ENCODE measurements at regions of chr14 and their contacts with region 1.

Region 1: GRCh38 chr14:80987235-80988032 is 32.0 kb downstream of the TSHR start:
- DNase-seq: peak; percentile 38 to 80 (median 63)
- ATAC-seq: peak; percentile 82
- H3K4me3 ChIP-seq: no peak overlapping the region
- H3K4me3 Mint-ChIP-seq: no peak overlapping the region
- H3K27ac ChIP-seq: no peak overlapping the region
- H3K27ac Mint-ChIP-seq: no peak overlapping the region
- H3K4me1 ChIP-seq: no peaks in the 10 kb centered on the region
- H3K4me1 Mint-ChIP-seq: no peaks in the 10 kb centered on the region
- H3K27me3 ChIP-seq: no peaks in the 10 kb centered on the region
- H3K27me3 Mint-ChIP-seq: peaks cover 2% of the 10 kb centered on the region
- CTCF ChIP-seq: peak; percentile 96

Region 2: GRCh38 chr14:80055667-80056496 is 931.6 kb before region 1 on chr14:
- CTCF ChIA-PET with region 1: no interaction called
- POLR2A ChIA-PET with region 1: no interaction called
- intact Hi-C with region 1: loop called in 1 of 2 experiments (anchors 2 kb)
- DNase-seq: peak in 1 of 9 experiments; percentile 1
- ATAC-seq: no peak
- H3K4me3 ChIP-seq: no peak overlapping the region
- H3K4me3 Mint-ChIP-seq: no peak overlapping the region
- H3K27ac ChIP-seq: no peak overlapping the region
- H3K27ac Mint-ChIP-seq: no peak overlapping the region
- H3K4me1 ChIP-seq: no peaks in the 10 kb centered on the region
- H3K4me1 Mint-ChIP-seq: no peaks in the 10 kb centered on the region
- H3K27me3 ChIP-seq: no peaks in the 10 kb centered on the region
- H3K27me3 Mint-ChIP-seq: no peaks in the 10 kb centered on the region
- CTCF ChIP-seq: no peak

Region 3: DNA sequence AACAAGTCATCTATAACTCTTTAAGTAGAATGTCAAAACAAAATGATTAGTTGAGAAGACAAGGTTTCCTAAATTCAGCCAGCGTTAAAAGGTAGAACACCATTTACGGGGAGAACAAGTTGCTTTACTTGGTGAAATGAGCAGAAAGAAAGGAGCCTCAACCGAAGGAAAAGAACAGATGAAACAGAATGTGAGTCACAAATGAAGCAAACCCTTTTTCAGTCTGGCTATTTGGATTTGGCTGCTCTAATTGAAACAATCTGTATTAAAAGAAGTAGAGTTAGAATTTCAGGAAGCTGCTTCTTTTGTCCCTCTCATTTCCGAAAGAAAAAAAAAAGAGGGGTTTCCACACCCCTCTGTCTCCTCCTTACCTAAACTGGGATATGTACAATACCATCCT is 80.5 kb before region 1 on chr14:
- CTCF ChIA-PET with region 1: no interaction called
- POLR2A ChIA-PET with region 1: no interaction called
- intact Hi-C with region 1: no loop called
- DNase-seq: no peak
- ATAC-seq: no peak
- H3K4me3 ChIP-seq: no peak overlapping the region
- H3K4me3 Mint-ChIP-seq: no peak overlapping the region
- H3K27ac ChIP-seq: no peak overlapping the region
- H3K27ac Mint-ChIP-seq: no peak overlapping the region
- H3K4me1 ChIP-seq: no peaks in the 10 kb centered on the region
- H3K4me1 Mint-ChIP-seq: no peaks in the 10 kb centered on the region
- H3K27me3 ChIP-seq: no peaks in the 10 kb centered on the region
- H3K27me3 Mint-ChIP-seq: no peaks in the 10 kb centered on the region
- CTCF ChIP-seq: no peak

Region 4: DNA sequence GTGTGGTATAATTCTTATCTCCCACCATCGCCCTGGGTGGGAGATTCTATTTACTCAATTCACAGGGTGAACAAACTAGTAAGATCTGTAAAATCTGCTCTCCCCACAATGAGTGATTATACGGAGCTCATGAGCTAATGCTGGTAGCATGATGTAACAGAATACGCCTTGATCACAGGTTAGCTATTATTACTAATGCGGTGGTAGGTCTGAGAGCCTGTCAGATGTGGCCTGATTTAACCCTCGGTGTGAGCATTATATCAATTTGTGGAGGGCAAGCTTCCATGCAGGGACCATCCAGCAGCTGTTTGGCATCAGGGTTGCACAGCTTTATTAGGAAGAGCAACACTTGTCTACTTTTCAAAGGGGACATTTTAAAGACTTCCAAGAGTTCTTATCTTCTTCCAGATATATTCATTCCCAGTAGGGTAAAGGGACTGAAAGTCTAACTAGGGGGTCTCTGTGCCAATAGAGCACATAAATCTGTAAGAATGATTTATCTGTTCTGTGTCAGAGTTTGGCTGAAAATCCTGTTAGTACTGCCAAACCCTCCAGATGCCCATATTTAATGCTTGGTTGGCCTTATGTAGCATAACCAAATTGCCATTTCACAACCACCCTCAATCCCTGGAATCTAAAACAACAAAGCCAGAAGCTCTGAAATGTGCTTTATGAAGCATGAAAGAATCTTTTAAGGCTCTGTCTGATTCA is 13.3 kb before region 1 on chr14:
- CTCF ChIA-PET with region 1: interaction called, 17 read pairs
- POLR2A ChIA-PET with region 1: interaction called, 3 read pairs
- intact Hi-C with region 1: no loop called
- DNase-seq: peak in 2 of 9 experiments; percentile 38 to 50
- ATAC-seq: peak; percentile 73
- H3K4me3 ChIP-seq: no peak overlapping the region
- H3K4me3 Mint-ChIP-seq: no peak overlapping the region
- H3K27ac ChIP-seq: no peak overlapping the region
- H3K27ac Mint-ChIP-seq: peak overlapping the region; percentile 24
- H3K4me1 ChIP-seq: no peaks in the 10 kb centered on the region
- H3K4me1 Mint-ChIP-seq: peaks cover 11% of the 10 kb centered on the region
- H3K27me3 ChIP-seq: no peaks in the 10 kb centered on the region
- H3K27me3 Mint-ChIP-seq: peaks cover 2% of the 10 kb centered on the region
- CTCF ChIP-seq: no peak

Region 5: DNA sequence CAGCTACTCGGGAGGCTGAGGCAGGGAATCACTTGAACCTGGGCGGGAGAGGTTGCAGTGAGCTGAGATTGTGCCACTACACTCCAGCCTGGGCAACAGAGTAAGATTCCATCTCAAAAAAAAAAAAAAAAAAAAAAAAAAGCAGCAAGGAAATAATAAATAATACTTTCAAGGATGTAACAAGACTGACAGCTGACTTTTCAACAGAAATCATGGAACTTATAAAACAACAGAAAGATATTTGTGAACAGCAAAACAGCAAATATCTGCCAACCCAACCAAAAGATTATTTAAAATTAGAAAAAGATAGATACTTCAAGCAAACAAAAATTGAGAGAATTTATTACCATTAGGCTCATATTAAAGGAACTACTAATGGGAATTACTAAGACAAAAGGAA is 83.1 kb after region 1 on chr14:
- CTCF ChIA-PET with region 1: no interaction called
- POLR2A ChIA-PET with region 1: no interaction called
- intact Hi-C with region 1: no loop called
- DNase-seq: no peak
- ATAC-seq: no peak
- H3K4me3 ChIP-seq: no peak overlapping the region
- H3K4me3 Mint-ChIP-seq: no peak overlapping the region
- H3K27ac ChIP-seq: no peak overlapping the region
- H3K27ac Mint-ChIP-seq: no peak overlapping the region
- H3K4me1 ChIP-seq: no peaks in the 10 kb centered on the region
- H3K4me1 Mint-ChIP-seq: no peaks in the 10 kb centered on the region
- H3K27me3 ChIP-seq: no peaks in the 10 kb centered on the region
- H3K27me3 Mint-ChIP-seq: no peaks in the 10 kb centered on the region
- CTCF ChIP-seq: no peak